ENCODE measurements at regions of chr22 and their contacts with region 1.

Region 1: DNA sequence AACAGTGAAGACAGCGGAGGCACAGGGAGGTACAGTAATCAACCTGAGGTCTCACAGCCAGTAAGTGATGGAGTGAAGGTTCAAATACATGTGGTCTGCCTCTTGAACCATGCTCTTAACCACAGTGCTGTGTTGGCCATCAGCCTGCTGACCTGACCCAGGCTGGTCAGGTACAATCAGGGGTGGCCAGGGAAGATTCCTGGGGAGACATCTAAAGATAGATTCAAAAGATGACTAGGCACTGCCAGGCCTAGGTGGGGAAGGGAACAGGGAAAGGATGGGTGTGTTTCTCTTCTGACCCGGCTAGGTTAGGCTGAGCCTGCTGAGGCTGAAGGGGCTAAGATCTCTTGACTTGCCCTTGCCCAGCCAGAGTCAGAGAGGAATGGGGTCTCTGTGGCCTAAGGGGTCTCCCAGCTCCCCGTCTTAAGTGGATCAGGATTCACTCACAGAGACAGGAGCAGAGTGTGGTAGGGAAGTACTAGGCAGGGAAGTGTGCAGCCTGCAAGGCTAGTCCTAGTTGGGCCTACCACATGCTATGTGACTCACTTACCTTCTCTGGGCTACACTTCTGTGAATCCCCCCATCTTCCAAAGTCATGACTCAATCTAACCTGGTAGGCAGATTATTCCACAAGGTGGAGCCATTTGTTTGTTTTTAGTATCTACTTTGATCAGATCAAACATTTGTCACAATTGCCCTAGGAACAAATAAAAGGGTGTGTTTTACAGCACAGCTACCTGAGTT is 10.4 kb upstream of the SREBF2 start:
- DNase-seq: peak; percentile 65
- H3K4me3 ChIP-seq: no peak overlapping the region
- H3K27ac ChIP-seq: no peak overlapping the region
- H3K4me1 ChIP-seq: peaks cover 3% of the 10 kb centered on the region
- H3K27me3 ChIP-seq: no peaks in the 10 kb centered on the region
- CTCF ChIP-seq: peak; percentile 17 to 29
- POLR2A ChIP-seq: no peak

Region 2: GRCh38 chr22:41517172-41518047 is 305.1 kb before region 1 on chr22:
- CTCF ChIA-PET with region 1: no interaction called
- POLR2A ChIA-PET with region 1: no interaction called
- dilution Hi-C with region 1: no loop called
- intact Hi-C with region 1: no loop called
- DNase-seq: peak; percentile 64
- H3K4me3 ChIP-seq: no peak overlapping the region
- H3K27ac ChIP-seq: no peak overlapping the region
- H3K4me1 ChIP-seq: peaks cover 3% of the 10 kb centered on the region
- H3K27me3 ChIP-seq: no peaks in the 10 kb centered on the region
- CTCF ChIP-seq: peak; percentile 80 to 89
- POLR2A ChIP-seq: no peak

Region 3: GRCh38 chr22:41832553-41833368 is 10.3 kb after region 1 on chr22 and contains the start of gene SREBF2:
- CTCF ChIA-PET with region 1: interaction called, 16 read pairs
- POLR2A ChIA-PET with region 1: no interaction called
- dilution Hi-C with region 1: no loop called
- intact Hi-C with region 1: no loop called
- DNase-seq: peak; percentile 100
- H3K4me3 ChIP-seq: peak within 1 kb of the TSS; percentile 59 to 81 (median 75)
- H3K27ac ChIP-seq: peak within 1 kb of the TSS; percentile 73
- H3K4me1 ChIP-seq: peaks cover 16% of the 10 kb centered on the region
- H3K27me3 ChIP-seq: no peaks in the 10 kb centered on the region
- CTCF ChIP-seq: no peak
- POLR2A ChIP-seq: peak; percentile 68
- total RNA-seq, gene SREBF2: 136 and 144 TPM in 2 replicates

Region 4: GRCh38 chr22:41857155-41857859 is 34.8 kb after region 1 on chr22:
- CTCF ChIA-PET with region 1: interaction called, 10 read pairs
- POLR2A ChIA-PET with region 1: no interaction called
- dilution Hi-C with region 1: no loop called
- intact Hi-C with region 1: loop called (anchors 1 kb)
- DNase-seq: peak; percentile 70
- H3K4me3 ChIP-seq: no peak overlapping the region
- H3K27ac ChIP-seq: no peak overlapping the region
- H3K4me1 ChIP-seq: peaks cover 10% of the 10 kb centered on the region
- H3K27me3 ChIP-seq: no peaks in the 10 kb centered on the region
- CTCF ChIP-seq: peak; percentile 60 to 65
- POLR2A ChIP-seq: no peak

Region 5: GRCh38 chr22:41957941-41958556 is 135.6 kb after region 1 on chr22:
- CTCF ChIA-PET with region 1: interaction called, 5 read pairs
- POLR2A ChIA-PET with region 1: no interaction called
- dilution Hi-C with region 1: no loop called
- intact Hi-C with region 1: loop called (anchors 5 kb)
- DNase-seq: no peak
- H3K4me3 ChIP-seq: no peak overlapping the region
- H3K27ac ChIP-seq: no peak overlapping the region
- H3K4me1 ChIP-seq: no peaks in the 10 kb centered on the region
- H3K27me3 ChIP-seq: no peaks in the 10 kb centered on the region
- CTCF ChIP-seq: no peak
- POLR2A ChIP-seq: no peak

Measured in endothelial cell of umbilical vein (primary cell).